A673 (cell line): ENCODE measurements at regions of chr6 and their contacts with region 1.

Region 1: DNA sequence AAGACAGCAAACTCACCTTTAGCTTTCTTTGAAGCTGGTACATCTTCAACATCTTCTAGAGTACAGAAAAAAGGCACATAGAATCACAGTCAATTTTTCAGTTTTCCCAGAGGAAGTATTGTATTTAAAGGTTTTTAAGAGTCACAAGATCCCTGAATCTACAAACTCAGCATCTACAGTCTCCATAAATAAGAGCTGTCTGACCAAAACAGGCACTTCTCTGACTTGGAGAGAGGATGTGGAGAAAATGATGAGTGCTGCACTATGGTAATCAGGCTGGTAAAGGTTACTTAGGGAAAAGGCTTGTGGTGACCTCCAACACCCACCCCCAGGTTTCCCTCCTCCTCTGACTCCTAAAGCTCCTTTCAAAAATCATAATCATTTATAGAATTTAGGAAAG is 228.0 kb downstream of the CLVS2 start:
- DNase-seq: peak; percentile 90
- H3K4me3 ChIP-seq: peak overlapping the region; percentile 3
- H3K27ac ChIP-seq: peak overlapping the region; percentile 99
- H3K4me1 ChIP-seq: peaks cover 73% of the 10 kb centered on the region
- H3K27me3 ChIP-seq: no peaks in the 10 kb centered on the region
- CTCF ChIP-seq: no peak

Region 2: GRCh38 chr6:121726596-121726995 is 1497.5 kb before region 1 on chr6:
- CTCF ChIA-PET with region 1: no interaction called
- POLR2A ChIA-PET with region 1: no interaction called
- intact Hi-C with region 1: no loop called
- DNase-seq: no peak
- H3K4me3 ChIP-seq: no peak overlapping the region
- H3K27ac ChIP-seq: no peak overlapping the region
- H3K4me1 ChIP-seq: no peaks in the 10 kb centered on the region
- H3K27me3 ChIP-seq: no peaks in the 10 kb centered on the region
- CTCF ChIP-seq: no peak

Region 3: GRCh38 chr6:122449069-122449468 is 775.0 kb before region 1 on chr6:
- CTCF ChIA-PET with region 1: no interaction called
- POLR2A ChIA-PET with region 1: no interaction called
- intact Hi-C with region 1: no loop called
- DNase-seq: no peak
- H3K4me3 ChIP-seq: no peak overlapping the region
- H3K27ac ChIP-seq: no peak overlapping the region
- H3K4me1 ChIP-seq: no peaks in the 10 kb centered on the region
- H3K27me3 ChIP-seq: no peaks in the 10 kb centered on the region
- CTCF ChIP-seq: no peak

Region 4: DNA sequence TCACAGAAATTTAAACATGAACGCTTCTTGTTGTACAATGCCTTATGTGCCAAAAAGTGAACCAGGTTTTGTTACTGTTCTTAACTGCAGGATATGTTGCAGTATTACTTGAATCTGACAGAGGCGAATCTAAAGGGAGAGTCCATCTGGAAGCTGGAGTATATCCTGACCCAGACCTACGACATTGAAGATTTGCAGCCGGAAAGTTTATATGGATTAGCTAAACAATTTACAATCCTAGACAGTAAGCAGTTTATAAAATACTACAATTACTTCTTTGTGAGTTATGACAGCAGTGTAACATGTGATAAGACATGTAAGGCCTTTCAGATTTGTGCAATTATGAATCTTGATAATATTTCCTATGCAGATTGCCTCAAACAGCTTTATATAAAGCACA is 415.1 kb before region 1 on chr6:
- CTCF ChIA-PET with region 1: no interaction called
- POLR2A ChIA-PET with region 1: no interaction called
- intact Hi-C with region 1: loop called (anchors 1 kb)
- DNase-seq: peak; percentile 64
- H3K4me3 ChIP-seq: peak overlapping the region; percentile 27
- H3K27ac ChIP-seq: peak overlapping the region; percentile 87
- H3K4me1 ChIP-seq: peaks cover 40% of the 10 kb centered on the region
- H3K27me3 ChIP-seq: no peaks in the 10 kb centered on the region
- CTCF ChIP-seq: no peak

Region 5: DNA sequence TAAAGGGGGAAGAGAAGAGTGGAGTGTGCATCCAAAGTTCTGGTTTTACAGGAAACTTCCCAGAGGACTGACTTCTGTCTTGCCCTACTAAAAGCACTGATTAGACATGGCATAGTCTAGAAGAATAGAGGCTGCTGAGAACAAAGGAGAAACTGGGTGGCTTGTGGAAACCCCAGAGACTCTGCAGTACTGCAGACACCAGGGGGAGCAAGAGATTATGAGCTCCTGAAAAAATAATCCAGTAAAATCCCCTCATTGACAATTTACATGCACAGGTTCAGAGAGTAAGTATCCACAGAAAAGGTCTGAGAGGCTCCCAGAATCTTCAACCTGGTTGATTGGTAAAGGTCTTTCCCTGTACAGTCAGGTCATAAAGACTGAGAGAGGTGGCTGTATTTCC is 276.7 kb before region 1 on chr6:
- CTCF ChIA-PET with region 1: no interaction called
- POLR2A ChIA-PET with region 1: no interaction called
- intact Hi-C with region 1: loop called (anchors 5 kb)
- DNase-seq: peak; percentile 78
- H3K4me3 ChIP-seq: no peak overlapping the region
- H3K27ac ChIP-seq: no peak overlapping the region
- H3K4me1 ChIP-seq: no peaks in the 10 kb centered on the region
- H3K27me3 ChIP-seq: no peaks in the 10 kb centered on the region
- CTCF ChIP-seq: peak; percentile 73

Region 6: GRCh38 chr6:123062670-123063069 is 161.4 kb before region 1 on chr6:
- CTCF ChIA-PET with region 1: no interaction called
- POLR2A ChIA-PET with region 1: no interaction called
- intact Hi-C with region 1: loop called (anchors 2 kb)
- DNase-seq: peak; percentile 77
- H3K4me3 ChIP-seq: no peak overlapping the region
- H3K27ac ChIP-seq: peak overlapping the region; percentile 72
- H3K4me1 ChIP-seq: peaks cover 43% of the 10 kb centered on the region
- H3K27me3 ChIP-seq: no peaks in the 10 kb centered on the region
- CTCF ChIP-seq: no peak

Region 7: DNA sequence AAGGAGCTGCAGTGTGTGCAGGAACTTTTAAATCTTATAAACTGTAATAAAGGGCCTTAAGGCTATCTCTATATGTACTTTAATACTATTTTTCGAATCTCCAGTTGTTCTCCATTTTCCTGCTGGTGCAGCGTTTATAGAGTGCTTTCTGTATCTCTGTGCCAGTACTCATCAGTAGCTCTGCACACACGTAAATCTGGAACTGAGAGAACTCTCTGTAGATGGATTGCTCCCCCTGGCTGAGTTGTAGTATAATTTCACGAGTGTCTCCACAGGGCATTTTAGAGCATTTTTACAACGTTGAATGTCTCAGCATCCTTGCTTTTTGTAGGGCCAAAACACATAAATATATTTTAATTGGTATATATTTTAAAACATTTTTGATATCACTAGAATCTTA is 156.2 kb after region 1 on chr6:
- CTCF ChIA-PET with region 1: interaction called, 5 read pairs
- POLR2A ChIA-PET with region 1: no interaction called
- intact Hi-C with region 1: loop called (anchors 2 kb)
- DNase-seq: peak; percentile 94
- H3K4me3 ChIP-seq: peak overlapping the region; percentile 20
- H3K27ac ChIP-seq: peak overlapping the region; percentile 67
- H3K4me1 ChIP-seq: peaks cover 40% of the 10 kb centered on the region
- H3K27me3 ChIP-seq: no peaks in the 10 kb centered on the region
- CTCF ChIP-seq: peak; percentile 76

Region 8: GRCh38 chr6:123598011-123598410 is 373.9 kb after region 1 on chr6:
- CTCF ChIA-PET with region 1: no interaction called
- POLR2A ChIA-PET with region 1: no interaction called
- intact Hi-C with region 1: no loop called
- DNase-seq: no peak
- H3K4me3 ChIP-seq: no peak overlapping the region
- H3K27ac ChIP-seq: no peak overlapping the region
- H3K4me1 ChIP-seq: no peaks in the 10 kb centered on the region
- H3K27me3 ChIP-seq: no peaks in the 10 kb centered on the region
- CTCF ChIP-seq: no peak